Breast epithelium (tissue), 4 donors: ENCODE measurements at regions of chrX and their contacts with region 1.

Region 1: DNA sequence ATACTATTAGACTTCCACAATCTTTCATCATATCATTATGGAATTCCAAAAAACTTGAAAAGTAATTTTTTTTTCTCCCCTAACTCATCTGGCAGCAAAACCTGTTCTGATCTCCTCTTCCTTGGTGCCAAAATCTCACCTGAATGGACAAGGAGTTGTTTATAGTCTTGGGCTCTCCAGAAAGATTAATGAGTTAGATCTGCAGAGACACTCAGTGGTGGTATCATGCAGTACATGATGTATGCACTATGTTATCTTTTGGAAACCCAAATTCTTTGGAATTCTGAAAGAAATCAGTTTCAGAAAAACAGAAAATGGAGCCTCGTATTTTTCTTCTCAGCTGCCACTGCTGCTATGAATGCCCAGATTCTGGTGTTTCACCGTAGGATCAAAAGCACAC is 11.7 kb downstream of the GPM6B start:
- DNase-seq: no peak
- H3K4me3 ChIP-seq: no peak overlapping the region
- H3K27ac ChIP-seq: no peak overlapping the region
- H3K4me1 ChIP-seq: no peaks in the 10 kb centered on the region
- H3K27me3 ChIP-seq: peaks cover 0 to 46% of the 10 kb centered on the region in 2 donors
- CTCF ChIP-seq: no peak
- POLR2A ChIP-seq: no peak

Region 2: GRCh38 chrX:13550346-13550745 is 254.9 kb before region 1 on chrX:
- intact Hi-C with region 1: loop called (anchors 5 kb)
- DNase-seq: no peak
- H3K4me3 ChIP-seq: no peak overlapping the region
- H3K27ac ChIP-seq: no peak overlapping the region
- H3K4me1 ChIP-seq: no peaks in the 10 kb centered on the region
- H3K27me3 ChIP-seq: peaks cover 0 to 64% of the 10 kb centered on the region in 2 donors
- CTCF ChIP-seq: no peak
- POLR2A ChIP-seq: no peak

Region 3: GRCh38 chrX:13923845-13924244 is 118.6 kb after region 1 on chrX:
- intact Hi-C with region 1: no loop called
- DNase-seq: peak in 1 of 2 donors; percentile 50
- H3K4me3 ChIP-seq: no peak overlapping the region
- H3K27ac ChIP-seq: no peak overlapping the region
- H3K4me1 ChIP-seq: no peaks in the 10 kb centered on the region
- H3K27me3 ChIP-seq: peaks cover 0 to 27% of the 10 kb centered on the region in 2 donors
- CTCF ChIP-seq: no peak
- POLR2A ChIP-seq: no peak